ENCODE measurements at regions of chr16 and their contacts with region 1.

Region 1: DNA sequence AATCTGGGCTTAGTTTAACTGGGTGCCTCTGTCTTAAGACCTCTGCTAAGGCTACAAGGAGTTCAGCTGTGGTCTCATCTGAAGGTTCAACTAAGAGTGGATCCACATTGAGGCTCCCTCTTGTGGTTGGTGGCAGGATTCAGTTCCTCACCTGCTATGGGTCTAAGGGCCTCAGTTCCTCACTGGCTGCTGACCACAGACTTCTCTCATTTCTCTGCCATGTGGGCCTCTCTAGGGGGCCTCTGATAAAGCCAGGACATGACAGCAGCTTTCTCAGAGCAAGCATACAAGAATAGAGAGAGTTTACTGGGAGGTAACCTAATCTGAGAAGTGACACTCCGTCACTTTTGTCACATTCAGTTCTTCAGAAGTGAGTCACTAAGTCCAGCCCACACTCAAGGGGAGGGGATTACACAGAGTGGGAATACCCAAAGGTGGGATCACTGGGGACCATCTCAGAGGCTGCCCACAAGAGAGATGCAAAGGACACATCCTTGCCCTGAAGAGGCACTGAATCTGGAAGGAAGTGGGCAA is 19.2 kb upstream of the ABAT start:
- H3K4me3 Mint-ChIP-seq: no peak overlapping the region
- H3K27ac Mint-ChIP-seq: peak overlapping the region; percentile 47
- H3K4me1 Mint-ChIP-seq: peaks cover 12% of the 10 kb centered on the region
- H3K27me3 Mint-ChIP-seq: no peaks in the 10 kb centered on the region

Region 2: GRCh38 chr16:8868416-8869211 is 213.4 kb after region 1 on chr16 and contains the start of gene CARHSP1:
- intact Hi-C with region 1: loop called (anchors 10 kb)
- H3K4me3 Mint-ChIP-seq: peak within 1 kb of the TSS; percentile 96
- H3K27ac Mint-ChIP-seq: peak within 1 kb of the TSS; percentile 79
- H3K4me1 Mint-ChIP-seq: peaks cover 54% of the 10 kb centered on the region
- H3K27me3 Mint-ChIP-seq: peaks cover 2% of the 10 kb centered on the region

Measured in dendritic cell treated with granulocyte-macrophage colony-stimulating factor and Interleukin-4, amounts not matched to agents 40 ng/mL and 50 ng/mL, for 4 days (primary cell).